Activated CD8-positive, alpha-beta memory T cell treated with anti-CD3 and anti-CD28 coated beads, Interleukin-2, amount 10 ng/mL, durations not matched to agents 7 days and 5 days (primary cell): ENCODE measurements at regions of chrX and their contacts with region 1.

Region 1: DNA sequence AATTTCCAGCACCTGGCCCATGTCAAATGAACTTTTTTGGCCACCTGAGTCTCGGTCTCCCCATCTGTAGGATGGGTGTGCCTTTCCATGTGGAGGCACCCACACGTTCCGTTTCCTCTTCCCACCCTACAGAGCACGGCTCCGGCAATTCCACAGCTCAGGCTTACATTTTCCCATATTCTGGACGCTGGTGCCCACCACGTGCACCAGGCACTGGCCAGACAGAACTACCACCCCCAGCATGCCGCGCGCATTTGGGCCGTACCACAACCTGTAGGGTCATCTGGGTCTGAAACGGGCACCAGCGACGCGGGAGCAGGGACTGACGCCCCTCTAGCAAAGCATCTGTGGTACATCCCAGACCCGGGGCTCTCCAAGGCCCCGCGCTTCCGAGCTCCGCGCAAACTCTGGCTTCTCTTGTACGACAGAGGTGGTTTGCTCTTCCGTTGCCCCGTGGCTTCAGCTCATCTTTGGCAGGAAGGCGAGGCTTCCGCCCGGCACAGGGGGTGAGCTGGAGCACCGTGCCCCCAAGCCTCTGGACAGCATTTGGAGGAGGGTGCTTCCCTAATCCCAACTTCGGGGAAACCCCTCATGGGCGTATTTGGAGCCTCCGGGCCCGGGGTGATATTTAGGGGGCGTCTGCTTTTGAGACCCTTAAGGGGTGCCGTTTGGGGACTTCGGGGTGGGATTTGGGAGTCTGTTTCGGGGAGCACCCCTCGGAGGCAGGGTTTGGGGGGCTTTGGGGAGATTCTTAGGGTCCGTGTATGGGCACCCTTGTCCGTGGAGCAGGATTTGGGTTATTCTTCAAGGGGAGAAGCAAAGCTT is 3.0 kb upstream of the UBA1 start:
- DNase-seq: peak; percentile 91
- ATAC-seq: peak; percentile 78
- H3K4me3 Mint-ChIP-seq: peak overlapping the region; percentile 84
- H3K27ac Mint-ChIP-seq: peak overlapping the region; percentile 93
- H3K4me1 Mint-ChIP-seq: peaks cover 31% of the 10 kb centered on the region
- H3K27me3 Mint-ChIP-seq: no peaks in the 10 kb centered on the region

Region 2: GRCh38 chrX:47144626-47145394 is 45.8 kb before region 1 on chrX and contains the starts of genes NDUFB11 and RBM10:
- CTCF ChIA-PET with region 1: interaction called, 10 read pairs
- DNase-seq: peak; percentile 96
- ATAC-seq: peak; percentile 95
- H3K4me3 Mint-ChIP-seq: peak within 1 kb of the TSS; percentile 98
- H3K27ac Mint-ChIP-seq: peak within 1 kb of the TSS; percentile 99
- H3K4me1 Mint-ChIP-seq: peaks cover 23% of the 10 kb centered on the region
- H3K27me3 Mint-ChIP-seq: no peaks in the 10 kb centered on the region
- total RNA-seq, gene NDUFB11: 82.7 to 97.6 TPM
- total RNA-seq, gene RBM10: 64.9 to 65.6 TPM

Region 3: DNA sequence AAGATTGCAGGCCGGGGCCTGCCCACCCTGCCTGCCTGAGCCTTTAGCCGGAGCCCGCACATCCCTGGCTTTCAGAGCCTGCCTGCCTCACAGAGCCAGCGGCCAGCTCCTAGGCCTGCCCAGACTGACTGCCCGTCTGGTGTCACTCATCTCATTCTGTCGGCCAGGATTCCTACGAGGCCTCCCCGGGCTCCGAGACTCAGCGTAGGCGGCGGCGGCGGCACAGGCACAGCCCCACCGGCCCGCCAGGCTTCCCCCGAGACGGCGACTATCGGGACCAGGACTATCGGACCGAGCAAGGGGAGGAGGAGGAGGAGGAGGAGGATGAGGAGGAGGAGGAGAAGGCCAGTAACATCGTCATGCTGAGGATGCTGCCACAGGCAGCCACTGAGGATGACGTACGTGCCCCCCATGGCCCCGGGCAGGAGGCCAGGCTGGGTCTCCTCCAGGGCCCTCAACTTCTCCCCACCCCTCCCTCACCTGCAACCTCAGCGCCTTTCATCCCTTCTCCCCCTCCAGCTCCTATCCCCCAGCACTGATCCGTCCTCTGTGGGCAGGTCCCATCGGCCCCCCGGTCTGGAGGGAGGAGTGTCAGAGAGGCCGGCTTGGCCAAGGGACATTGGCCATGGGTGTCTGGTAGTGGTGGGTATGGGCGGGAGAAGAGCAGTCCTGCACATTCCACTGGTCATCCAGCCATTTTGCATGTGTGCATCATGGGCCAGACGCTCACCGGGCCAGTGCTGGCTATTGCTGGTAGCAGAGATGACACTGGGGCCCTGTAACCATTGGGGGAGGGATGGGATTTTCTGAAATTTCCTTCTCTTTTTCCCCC is 19.6 kb before region 1 on chrX:
- CTCF ChIA-PET with region 1: no interaction called
- DNase-seq: no peak
- ATAC-seq: no peak
- H3K4me3 Mint-ChIP-seq: no peak overlapping the region
- H3K27ac Mint-ChIP-seq: no peak overlapping the region
- H3K4me1 Mint-ChIP-seq: peaks cover 1% of the 10 kb centered on the region
- H3K27me3 Mint-ChIP-seq: no peaks in the 10 kb centered on the region

Region 4: GRCh38 chrX:47384502-47384901 is 193.8 kb after region 1 on chrX:
- CTCF ChIA-PET with region 1: interaction called, 12 read pairs
- DNase-seq: peak; percentile 73
- ATAC-seq: peak; percentile 73
- H3K4me3 Mint-ChIP-seq: no peak overlapping the region
- H3K27ac Mint-ChIP-seq: no peak overlapping the region
- H3K4me1 Mint-ChIP-seq: peaks cover 18% of the 10 kb centered on the region
- H3K27me3 Mint-ChIP-seq: no peaks in the 10 kb centered on the region

Region 5: DNA sequence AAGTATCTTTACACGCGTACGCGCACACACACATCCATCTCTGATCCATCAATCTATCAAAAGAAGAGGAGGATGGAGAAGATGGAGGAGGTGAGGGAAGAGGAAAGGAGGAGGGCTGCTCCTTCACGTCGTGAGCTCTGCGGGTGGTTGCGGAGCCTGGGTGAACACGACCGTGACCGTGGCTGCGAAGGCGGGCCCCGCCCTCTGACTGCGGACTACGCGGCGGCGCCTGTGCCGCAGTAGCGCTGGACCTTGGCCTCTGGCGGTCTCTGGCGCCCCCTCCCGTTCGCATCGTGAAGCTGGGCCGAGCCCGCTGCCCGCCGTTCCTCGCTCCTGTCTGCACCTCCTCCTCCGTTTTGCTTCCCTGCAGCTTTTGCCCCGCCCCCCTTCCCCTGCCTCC is 332.6 kb after region 1 on chrX:
- CTCF ChIA-PET with region 1: interaction called, 15 read pairs
- DNase-seq: peak; percentile 82
- ATAC-seq: peak; percentile 100
- H3K4me3 Mint-ChIP-seq: peak overlapping the region; percentile 56
- H3K27ac Mint-ChIP-seq: no peak overlapping the region
- H3K4me1 Mint-ChIP-seq: peaks cover 6% of the 10 kb centered on the region
- H3K27me3 Mint-ChIP-seq: peaks cover 2% of the 10 kb centered on the region

Region 6: GRCh38 chrX:47662144-47662657 is 471.5 kb after region 1 on chrX:
- CTCF ChIA-PET with region 1: no interaction called
- DNase-seq: peak; percentile 47
- ATAC-seq: no peak
- H3K4me3 Mint-ChIP-seq: no peak overlapping the region
- H3K27ac Mint-ChIP-seq: peak overlapping the region; percentile 56
- H3K4me1 Mint-ChIP-seq: peaks cover 19% of the 10 kb centered on the region
- H3K27me3 Mint-ChIP-seq: no peaks in the 10 kb centered on the region